ENCODE measurements at regions of chr1 and their contacts with region 1.

Region 1: DNA sequence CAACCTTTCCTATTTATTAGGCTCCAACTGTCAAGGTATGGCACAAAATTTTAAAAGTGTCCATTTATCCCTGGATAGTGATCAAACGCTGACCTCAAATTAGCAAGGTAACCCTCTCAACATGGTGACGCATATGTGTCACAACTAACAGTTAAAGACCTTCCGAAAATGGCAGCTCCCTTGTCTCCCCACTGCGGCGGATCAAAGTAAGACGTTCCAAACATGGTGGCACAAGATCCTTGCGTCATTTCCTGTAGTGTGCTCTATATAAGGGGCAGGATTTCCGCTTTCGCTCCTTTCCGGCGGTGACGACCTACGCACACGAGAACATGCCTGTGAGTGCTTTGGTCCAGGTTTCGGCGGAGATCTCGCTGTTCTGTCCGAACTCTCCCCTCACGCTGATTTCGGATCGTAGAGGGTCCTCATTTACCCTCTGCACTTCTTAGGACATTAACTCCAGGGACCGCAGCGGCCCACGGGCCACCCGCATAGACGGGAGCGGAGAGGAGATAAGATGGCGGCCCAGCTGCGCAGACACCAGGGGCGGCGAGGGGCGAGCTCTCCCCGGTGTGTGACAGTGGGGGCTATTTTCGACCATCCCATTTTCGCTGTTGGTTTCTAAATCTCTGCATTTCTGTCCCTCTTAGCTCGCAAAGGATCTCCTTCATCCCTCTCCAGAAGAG is at the start of gene RPS27:
- DNase-seq: peak; percentile 97
- ATAC-seq: peak; percentile 84
- H3K4me3 ChIP-seq: peak within 1 kb of the TSS; percentile 84 to 100 (median 94)
- H3K4me3 Mint-ChIP-seq: peak within 1 kb of the TSS; percentile 97
- H3K27ac ChIP-seq: peak within 1 kb of the TSS; percentile 93 to 96
- H3K27ac Mint-ChIP-seq: peak within 1 kb of the TSS; percentile 99
- H3K4me1 ChIP-seq: peaks cover 38 to 51% of the 10 kb centered on the region in 2 donors
- H3K4me1 Mint-ChIP-seq: peaks cover 41% of the 10 kb centered on the region
- H3K27me3 ChIP-seq: no peaks in the 10 kb centered on the region
- H3K27me3 Mint-ChIP-seq: no peaks in the 10 kb centered on the region
- CTCF ChIP-seq: no peak
- total RNA-seq, gene RPS27: 4,276 and 4,812 TPM in 2 replicates

Region 2: DNA sequence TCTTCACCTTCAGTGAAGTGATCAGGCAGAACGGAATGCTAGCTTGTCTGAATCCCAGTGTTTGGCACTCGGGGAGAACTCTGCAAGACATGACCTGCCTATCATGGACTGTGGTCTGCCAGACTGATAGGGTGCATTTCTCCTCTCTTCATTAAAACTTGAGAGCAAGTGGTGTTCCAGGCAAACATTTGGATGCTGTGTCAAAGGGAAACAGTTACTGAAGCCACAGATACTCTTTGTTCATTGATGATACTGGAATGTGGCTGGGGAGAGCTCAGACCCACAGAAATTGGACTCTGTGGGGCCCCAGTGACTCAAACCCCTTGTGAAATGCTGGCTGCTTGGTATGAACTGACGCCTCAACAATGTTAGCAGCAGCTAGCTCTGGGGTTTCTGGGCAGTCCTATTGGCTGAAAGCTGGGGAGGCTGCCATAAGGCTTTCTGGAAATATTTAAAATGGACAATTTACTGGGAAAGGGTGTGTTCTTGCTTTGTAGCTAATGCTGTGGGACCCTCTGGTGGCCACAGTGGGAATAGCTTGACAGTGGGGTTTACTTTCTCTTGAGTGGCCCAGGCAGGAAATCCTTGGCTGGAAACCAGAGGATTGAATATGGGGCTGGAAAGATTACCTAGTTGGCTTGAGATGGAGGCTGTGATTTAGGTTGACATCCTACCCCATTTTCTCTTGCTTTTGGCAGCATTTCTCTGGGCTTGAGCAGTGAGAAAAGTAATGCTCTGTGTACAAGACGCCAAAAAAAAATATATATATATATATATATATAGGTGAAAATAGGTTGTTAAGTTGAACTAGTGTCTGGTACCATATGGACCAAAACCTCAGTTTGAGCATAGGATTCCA is 1989.0 kb before region 1 on chr1:
- CTCF ChIA-PET with region 1: no interaction called
- POLR2A ChIA-PET with region 1: no interaction called
- intact Hi-C with region 1: no loop called
- DNase-seq: peak; percentile 80
- ATAC-seq: peak; percentile 63
- H3K4me3 ChIP-seq: no peak overlapping the region
- H3K4me3 Mint-ChIP-seq: no peak overlapping the region
- H3K27ac ChIP-seq: no peak overlapping the region
- H3K27ac Mint-ChIP-seq: no peak overlapping the region
- H3K4me1 ChIP-seq: peaks cover 0 to under 1% of the 10 kb centered on the region in 2 donors
- H3K4me1 Mint-ChIP-seq: no peaks in the 10 kb centered on the region
- H3K27me3 ChIP-seq: peaks cover 0 to 31% (median 2%) of the 10 kb centered on the region in 4 experiments
- H3K27me3 Mint-ChIP-seq: peaks cover 38% of the 10 kb centered on the region
- CTCF ChIP-seq: peak; percentile 97

Region 3: GRCh38 chr1:153510984-153511410 is 479.6 kb before region 1 on chr1:
- CTCF ChIA-PET with region 1: interaction called, 12 read pairs
- POLR2A ChIA-PET with region 1: no interaction called
- intact Hi-C with region 1: loop called (anchors 1 kb)
- DNase-seq: peak; percentile 81
- ATAC-seq: peak; percentile 91
- H3K4me3 ChIP-seq: no peak overlapping the region
- H3K4me3 Mint-ChIP-seq: no peak overlapping the region
- H3K27ac ChIP-seq: no peak overlapping the region
- H3K27ac Mint-ChIP-seq: no peak overlapping the region
- H3K4me1 ChIP-seq: no peaks in the 10 kb centered on the region
- H3K4me1 Mint-ChIP-seq: no peaks in the 10 kb centered on the region
- H3K27me3 ChIP-seq: no peaks in the 10 kb centered on the region
- H3K27me3 Mint-ChIP-seq: peaks cover 4% of the 10 kb centered on the region
- CTCF ChIP-seq: peak; percentile 94

Region 4: GRCh38 chr1:153670859-153671627 is 319.6 kb before region 1 on chr1 and contains the start of gene ILF2:
- CTCF ChIA-PET with region 1: interaction called, 12 read pairs
- POLR2A ChIA-PET with region 1: no interaction called
- intact Hi-C with region 1: loop called (anchors 1 kb)
- DNase-seq: peak; percentile 99
- ATAC-seq: peak; percentile 90
- H3K4me3 ChIP-seq: peak within 1 kb of the TSS; percentile 74 to 99 (median 94)
- H3K4me3 Mint-ChIP-seq: no peak within 1 kb of the TSS
- H3K27ac ChIP-seq: peak within 1 kb of the TSS; percentile 86 to 95
- H3K27ac Mint-ChIP-seq: no peak within 1 kb of the TSS
- H3K4me1 ChIP-seq: peaks cover 10 to 18% of the 10 kb centered on the region in 2 donors
- H3K4me1 Mint-ChIP-seq: peaks cover 18% of the 10 kb centered on the region
- H3K27me3 ChIP-seq: no peaks in the 10 kb centered on the region
- H3K27me3 Mint-ChIP-seq: peaks cover under 1% of the 10 kb centered on the region
- CTCF ChIP-seq: peak; percentile 26
- total RNA-seq, gene ILF2: 86.5 and 89.8 TPM in 2 replicates

Region 5: DNA sequence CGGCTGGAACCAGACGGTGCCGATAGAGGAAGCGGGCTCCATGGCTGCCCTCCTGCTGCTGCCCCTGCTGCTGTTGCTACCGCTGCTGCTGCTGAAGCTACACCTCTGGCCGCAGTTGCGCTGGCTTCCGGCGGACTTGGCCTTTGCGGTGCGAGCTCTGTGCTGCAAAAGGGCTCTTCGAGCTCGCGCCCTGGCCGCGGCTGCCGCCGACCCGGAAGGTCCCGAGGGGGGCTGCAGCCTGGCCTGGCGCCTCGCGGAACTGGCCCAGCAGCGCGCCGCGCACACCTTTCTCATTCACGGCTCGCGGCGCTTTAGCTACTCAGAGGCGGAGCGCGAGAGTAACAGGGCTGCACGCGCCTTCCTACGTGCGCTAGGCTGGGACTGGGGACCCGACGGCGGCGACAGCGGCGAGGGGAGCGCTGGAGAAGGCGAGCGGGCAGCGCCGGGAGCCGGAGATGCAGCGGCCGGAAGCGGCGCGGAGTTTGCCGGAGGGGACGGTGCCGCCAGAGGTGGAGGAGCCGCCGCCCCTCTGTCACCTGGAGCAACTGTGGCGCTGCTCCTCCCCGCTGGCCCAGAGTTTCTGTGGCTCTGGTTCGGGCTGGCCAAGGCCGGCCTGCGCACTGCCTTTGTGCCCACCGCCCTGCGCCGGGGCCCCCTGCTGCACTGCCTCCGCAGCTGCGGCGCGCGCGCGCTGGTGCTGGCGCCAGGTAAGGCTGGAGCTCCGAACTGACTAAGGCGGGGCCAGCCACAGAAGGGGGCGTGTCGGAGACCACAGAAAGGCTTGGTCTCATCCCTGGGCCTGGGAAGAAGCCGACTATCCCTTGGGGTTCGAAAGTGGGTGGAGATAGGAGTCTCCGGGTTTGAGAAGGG is 214.9 kb before region 1 on chr1:
- CTCF ChIA-PET with region 1: interaction called, 11 read pairs
- POLR2A ChIA-PET with region 1: interaction called, 9 read pairs
- intact Hi-C with region 1: no loop called
- DNase-seq: peak; percentile 77
- ATAC-seq: peak; percentile 68
- H3K4me3 ChIP-seq: peak overlapping the region; percentile 49 to 80 (median 71)
- H3K4me3 Mint-ChIP-seq: peak overlapping the region; percentile 91
- H3K27ac ChIP-seq: peak overlapping the region; percentile 34 to 48
- H3K27ac Mint-ChIP-seq: peak overlapping the region; percentile 84
- H3K4me1 ChIP-seq: peaks cover 22 to 35% of the 10 kb centered on the region in 2 donors
- H3K4me1 Mint-ChIP-seq: peaks cover 31% of the 10 kb centered on the region
- H3K27me3 ChIP-seq: no peaks in the 10 kb centered on the region
- H3K27me3 Mint-ChIP-seq: no peaks in the 10 kb centered on the region
- CTCF ChIP-seq: no peak

Region 6: GRCh38 chr1:153816283-153816889 is 174.2 kb before region 1 on chr1:
- CTCF ChIA-PET with region 1: interaction called, 68 read pairs
- POLR2A ChIA-PET with region 1: interaction called, 3 read pairs
- intact Hi-C with region 1: loop called (anchors 1 kb)
- DNase-seq: no peak
- ATAC-seq: no peak
- H3K4me3 ChIP-seq: no peak overlapping the region
- H3K4me3 Mint-ChIP-seq: no peak overlapping the region
- H3K27ac ChIP-seq: no peak overlapping the region
- H3K27ac Mint-ChIP-seq: no peak overlapping the region
- H3K4me1 ChIP-seq: peaks cover 0 to 1% of the 10 kb centered on the region in 2 donors
- H3K4me1 Mint-ChIP-seq: peaks cover 3% of the 10 kb centered on the region
- H3K27me3 ChIP-seq: no peaks in the 10 kb centered on the region
- H3K27me3 Mint-ChIP-seq: no peaks in the 10 kb centered on the region
- CTCF ChIP-seq: no peak

Region 7: GRCh38 chr1:153958111-153958960 is 32.3 kb before region 1 on chr1 and contains the start of gene CRTC2:
- CTCF ChIA-PET with region 1: interaction called, 14 read pairs
- POLR2A ChIA-PET with region 1: interaction called, 11 read pairs
- intact Hi-C with region 1: loop called (anchors 1 kb)
- DNase-seq: peak; percentile 97
- ATAC-seq: peak; percentile 85
- H3K4me3 ChIP-seq: peak within 1 kb of the TSS; percentile 79 to 98 (median 92)
- H3K4me3 Mint-ChIP-seq: peak within 1 kb of the TSS; percentile 100
- H3K27ac ChIP-seq: peak within 1 kb of the TSS; percentile 87 to 97
- H3K27ac Mint-ChIP-seq: peak within 1 kb of the TSS; percentile 97
- H3K4me1 ChIP-seq: peaks cover 44 to 47% of the 10 kb centered on the region in 2 donors
- H3K4me1 Mint-ChIP-seq: peaks cover 67% of the 10 kb centered on the region
- H3K27me3 ChIP-seq: no peaks in the 10 kb centered on the region
- H3K27me3 Mint-ChIP-seq: no peaks in the 10 kb centered on the region
- CTCF ChIP-seq: no peak
- total RNA-seq, gene CRTC2: 153 and 157 TPM in 2 replicates

Region 8: GRCh38 chr1:154272217-154272998 is 281.8 kb after region 1 on chr1 and contains the start of gene HAX1:
- CTCF ChIA-PET with region 1: interaction called, 3 read pairs
- POLR2A ChIA-PET with region 1: interaction called, 3 read pairs
- intact Hi-C with region 1: loop called (anchors 1 kb)
- DNase-seq: peak; percentile 99
- ATAC-seq: peak; percentile 91
- H3K4me3 ChIP-seq: peak within 1 kb of the TSS; percentile 88 to 99 (median 90)
- H3K4me3 Mint-ChIP-seq: peak within 1 kb of the TSS; percentile 90
- H3K27ac ChIP-seq: peak within 1 kb of the TSS; percentile 90 to 93
- H3K27ac Mint-ChIP-seq: peak within 1 kb of the TSS; percentile 94
- H3K4me1 ChIP-seq: peaks cover 14 to 21% of the 10 kb centered on the region in 2 donors
- H3K4me1 Mint-ChIP-seq: peaks cover 34% of the 10 kb centered on the region
- H3K27me3 ChIP-seq: no peaks in the 10 kb centered on the region
- H3K27me3 Mint-ChIP-seq: no peaks in the 10 kb centered on the region
- CTCF ChIP-seq: peak; percentile 82
- total RNA-seq, gene HAX1: 74.2 and 85.7 TPM in 2 replicates